Pancreas (tissue), 10 donors: ENCODE measurements at regions of chr7 and their contacts with region 1.

Region 1: DNA sequence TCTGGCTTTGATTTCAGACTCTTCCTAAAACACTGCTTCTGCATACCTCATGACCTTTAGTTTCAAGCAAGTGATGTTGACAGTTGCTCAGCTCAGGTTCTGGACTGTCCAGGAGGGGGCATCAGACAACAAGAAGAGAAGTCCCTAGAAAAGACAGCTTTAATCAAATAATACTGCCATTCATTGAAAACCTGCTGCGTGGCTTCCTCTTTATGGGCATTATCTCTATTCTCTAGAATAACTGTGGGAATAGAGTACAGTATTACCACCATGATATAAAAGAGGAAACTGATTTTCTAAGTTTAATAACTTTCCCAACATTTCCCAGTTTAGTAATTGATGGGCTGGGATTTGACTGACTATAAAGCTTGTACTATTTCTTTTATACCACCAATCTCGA is 170.4 kb downstream of the SNX13 start:
- DNase-seq: peak in 3 of 6 donors; percentile 23 to 60 (median 53)
- ATAC-seq: peak in 3 of 4 donors; percentile 81 to 85 (median 85)
- H3K4me3 ChIP-seq: no peak overlapping the region
- H3K27ac ChIP-seq: no peak overlapping the region
- H3K4me1 ChIP-seq: no peaks in the 10 kb centered on the region
- H3K27me3 ChIP-seq: no peaks in the 10 kb centered on the region
- CTCF ChIP-seq: peak in 3 of 4 donors; percentile 42 to 46 (median 43)

Region 2: GRCh38 chr7:17466216-17466615 is 303.7 kb before region 1 on chr7:
- intact Hi-C with region 1: no loop called
- DNase-seq: no peak
- ATAC-seq: no peak
- H3K4me3 ChIP-seq: no peak overlapping the region
- H3K27ac ChIP-seq: no peak overlapping the region
- H3K4me1 ChIP-seq: no peaks in the 10 kb centered on the region
- H3K27me3 ChIP-seq: no peaks in the 10 kb centered on the region
- CTCF ChIP-seq: no peak

Region 3: DNA sequence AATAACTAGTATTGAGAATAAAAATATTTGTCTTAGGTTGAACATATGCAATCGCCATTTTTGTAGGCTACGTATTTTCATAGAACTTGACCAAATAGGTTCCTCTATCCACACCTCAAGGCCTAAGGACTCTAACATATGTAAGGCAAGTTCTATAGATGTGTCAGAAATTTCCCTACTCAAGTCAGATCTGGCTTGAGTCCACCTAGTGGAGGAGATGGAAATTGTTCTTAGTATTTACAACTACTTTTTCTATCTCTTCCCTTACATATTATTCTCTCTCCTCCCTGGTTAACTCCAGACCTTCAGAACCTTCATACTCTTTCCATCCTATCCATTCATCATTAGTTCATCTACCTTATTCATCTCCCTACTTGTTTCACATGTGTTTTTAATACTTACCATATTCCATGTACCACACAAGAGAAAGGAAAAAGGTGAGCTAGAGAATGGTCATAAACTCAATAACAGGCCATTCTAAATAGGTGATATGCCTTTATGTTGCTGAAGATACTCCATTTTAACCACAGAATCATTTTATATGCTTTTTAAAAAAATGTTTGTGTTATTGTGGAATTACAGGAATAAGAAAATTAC is 551.2 kb after region 1 on chr7:
- intact Hi-C with region 1: loop called in 1 of 3 experiments (anchors 10 kb)
- DNase-seq: no peak
- ATAC-seq: peak in 3 of 4 donors; percentile 51 to 75 (median 67)
- H3K4me3 ChIP-seq: no peak overlapping the region
- H3K27ac ChIP-seq: no peak overlapping the region
- H3K4me1 ChIP-seq: peaks cover 0 to 8% (median 0%) of the 10 kb centered on the region in 3 donors
- H3K27me3 ChIP-seq: no peaks in the 10 kb centered on the region
- CTCF ChIP-seq: peak; percentile 25 to 41 (median 32)

Region 4: DNA sequence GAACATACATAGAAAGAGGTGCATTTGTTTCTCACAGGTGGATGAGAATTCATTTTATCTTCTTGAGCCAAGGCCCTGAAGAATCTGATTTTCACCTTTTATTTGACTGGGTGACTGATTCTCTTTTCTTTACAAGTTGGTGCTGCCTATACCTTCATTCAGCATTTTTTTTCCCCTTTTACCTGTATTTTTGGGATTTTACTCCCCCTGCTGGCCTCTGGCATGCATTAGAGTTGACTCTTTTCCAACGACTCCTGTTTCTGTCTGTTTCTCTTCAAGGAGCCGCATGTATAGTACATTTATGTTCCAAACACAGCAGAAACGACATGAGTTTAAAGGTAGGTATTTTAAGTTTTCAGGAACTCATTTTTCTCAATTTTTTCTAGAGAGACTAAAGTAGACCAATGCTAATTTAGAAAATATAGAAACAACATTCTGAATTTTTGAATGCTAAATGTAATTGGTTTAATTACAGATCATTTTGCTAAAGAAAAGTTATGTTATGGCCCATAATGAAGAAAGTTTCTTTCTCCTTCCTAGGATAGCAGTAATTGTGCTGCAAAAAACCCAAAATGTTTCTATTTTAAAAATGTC is 575.8 kb after region 1 on chr7:
- intact Hi-C with region 1: loop called in 1 of 3 experiments (anchors 10 kb)
- DNase-seq: peak in 2 of 6 donors; percentile 7 to 38
- ATAC-seq: peak; percentile 50 to 82 (median 80)
- H3K4me3 ChIP-seq: no peak overlapping the region
- H3K27ac ChIP-seq: no peak overlapping the region
- H3K4me1 ChIP-seq: peaks cover 0 to 6% (median 0%) of the 10 kb centered on the region in 3 donors
- H3K27me3 ChIP-seq: no peaks in the 10 kb centered on the region
- CTCF ChIP-seq: peak; percentile 30 to 67 (median 66)